Gastrocnemius medialis (tissue), 4 donors: ENCODE measurements at regions of chr1 and their contacts with region 1.

Region 1: GRCh38 chr1:62407405-62408009 is 29.3 kb upstream of the USP1 start:
- DNase-seq: no peak
- ATAC-seq: peak; percentile 58 to 62
- H3K4me3 ChIP-seq: no peak overlapping the region
- H3K27ac ChIP-seq: no peak overlapping the region
- H3K4me1 ChIP-seq: no peaks in the 10 kb centered on the region
- H3K27me3 ChIP-seq: no peaks in the 10 kb centered on the region
- CTCF ChIP-seq: peak; percentile 32 to 78 (median 51)
- POLR2A ChIP-seq: no peak

Region 2: GRCh38 chr1:62175568-62176179 is 231.8 kb before region 1 on chr1:
- in situ Hi-C with region 1: loop called (anchors 5 to 10 kb)
- intact Hi-C with region 1: loop called (anchors 1 kb)
- DNase-seq: peak in 1 of 2 donors; percentile 4
- ATAC-seq: no peak
- H3K4me3 ChIP-seq: no peak overlapping the region
- H3K27ac ChIP-seq: no peak overlapping the region
- H3K4me1 ChIP-seq: no peaks in the 10 kb centered on the region
- H3K27me3 ChIP-seq: peaks cover 0 to 3% (median 0%) of the 10 kb centered on the region in 3 donors
- CTCF ChIP-seq: peak; percentile 25 to 68 (median 53)
- POLR2A ChIP-seq: no peak

Region 3: DNA sequence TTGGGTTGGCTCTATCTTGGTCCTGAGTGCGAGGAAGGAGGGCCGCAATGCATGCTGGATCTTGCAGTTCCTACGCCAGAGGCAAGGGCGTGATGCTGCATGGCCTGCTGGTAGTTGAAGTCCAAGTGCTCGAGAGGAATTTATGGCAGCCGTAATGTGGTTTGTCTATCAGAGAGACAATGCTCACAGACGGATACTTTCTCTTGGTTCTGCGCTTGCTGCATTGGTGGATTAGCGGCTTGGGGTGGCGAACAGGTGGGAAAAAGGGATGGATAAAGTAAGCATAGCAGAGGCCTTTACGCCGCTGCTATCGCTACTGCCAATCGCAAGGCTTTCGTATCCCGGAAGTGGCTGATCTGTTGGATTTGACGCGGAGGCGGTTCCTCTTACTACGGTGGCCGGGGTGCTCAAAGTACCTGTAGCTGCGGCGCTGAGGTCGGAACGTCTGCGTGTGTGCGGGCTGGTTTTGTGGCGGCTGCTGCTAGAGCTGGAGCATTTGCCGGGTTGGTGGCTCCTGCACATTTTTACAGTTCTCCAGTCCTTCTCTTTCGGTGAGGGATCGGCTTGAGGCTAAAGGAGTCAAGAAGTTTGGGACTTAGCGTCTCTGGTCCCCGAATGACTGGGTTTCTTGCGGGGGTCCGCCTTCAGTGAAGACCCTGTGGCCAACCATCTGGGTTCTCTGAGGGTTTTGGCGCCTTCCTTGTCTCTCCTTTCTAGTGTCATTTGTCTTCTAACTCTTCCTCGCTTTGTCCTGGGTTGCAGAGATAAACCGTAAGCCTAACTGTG is 376.4 kb after region 1 on chr1 and contains the start of gene ATG4C:
- in situ Hi-C with region 1: no loop called
- intact Hi-C with region 1: no loop called
- DNase-seq: peak; percentile 94 to 95
- ATAC-seq: peak; percentile 99
- H3K4me3 ChIP-seq: peak within 1 kb of the TSS; percentile 75 to 94 (median 88)
- H3K27ac ChIP-seq: peak within 1 kb of the TSS; percentile 89 to 97 (median 94)
- H3K4me1 ChIP-seq: peaks cover 9 to 13% of the 10 kb centered on the region in 2 donors
- H3K27me3 ChIP-seq: no peaks in the 10 kb centered on the region
- CTCF ChIP-seq: peak in 2 of 5 experiments; percentile 20 to 21
- POLR2A ChIP-seq: peak in 1 of 2 donors; percentile 36
- total RNA-seq, gene ATG4C: 2.5 to 5.8 (median 4.5) TPM